BJ (cell line): ENCODE measurements at regions of chr6 and their contacts with region 1.

Region 1: GRCh38 chr6:166466178-166467122 is 83.7 kb upstream of the MPC1 start:
- DNase-seq: peak; percentile 85
- H3K4me3 ChIP-seq: no peak overlapping the region
- H3K27me3 ChIP-seq: no peaks in the 10 kb centered on the region
- CTCF ChIP-seq: peak; percentile 1; the same call in 1 of the 2 replicates

Region 2: GRCh38 chr6:166728957-166729441 is 262.5 kb after region 1 on chr6:
- CTCF ChIA-PET with region 1: no interaction called
- POLR2A ChIA-PET with region 1: interaction called, 12 read pairs
- DNase-seq: no peak
- H3K4me3 ChIP-seq: no peak overlapping the region
- H3K27me3 ChIP-seq: no peaks in the 10 kb centered on the region; the same call in 1 of the 2 replicates
- CTCF ChIP-seq: no peak